ENCODE measurements at regions of chr15 and their contacts with region 1.

Region 1: DNA sequence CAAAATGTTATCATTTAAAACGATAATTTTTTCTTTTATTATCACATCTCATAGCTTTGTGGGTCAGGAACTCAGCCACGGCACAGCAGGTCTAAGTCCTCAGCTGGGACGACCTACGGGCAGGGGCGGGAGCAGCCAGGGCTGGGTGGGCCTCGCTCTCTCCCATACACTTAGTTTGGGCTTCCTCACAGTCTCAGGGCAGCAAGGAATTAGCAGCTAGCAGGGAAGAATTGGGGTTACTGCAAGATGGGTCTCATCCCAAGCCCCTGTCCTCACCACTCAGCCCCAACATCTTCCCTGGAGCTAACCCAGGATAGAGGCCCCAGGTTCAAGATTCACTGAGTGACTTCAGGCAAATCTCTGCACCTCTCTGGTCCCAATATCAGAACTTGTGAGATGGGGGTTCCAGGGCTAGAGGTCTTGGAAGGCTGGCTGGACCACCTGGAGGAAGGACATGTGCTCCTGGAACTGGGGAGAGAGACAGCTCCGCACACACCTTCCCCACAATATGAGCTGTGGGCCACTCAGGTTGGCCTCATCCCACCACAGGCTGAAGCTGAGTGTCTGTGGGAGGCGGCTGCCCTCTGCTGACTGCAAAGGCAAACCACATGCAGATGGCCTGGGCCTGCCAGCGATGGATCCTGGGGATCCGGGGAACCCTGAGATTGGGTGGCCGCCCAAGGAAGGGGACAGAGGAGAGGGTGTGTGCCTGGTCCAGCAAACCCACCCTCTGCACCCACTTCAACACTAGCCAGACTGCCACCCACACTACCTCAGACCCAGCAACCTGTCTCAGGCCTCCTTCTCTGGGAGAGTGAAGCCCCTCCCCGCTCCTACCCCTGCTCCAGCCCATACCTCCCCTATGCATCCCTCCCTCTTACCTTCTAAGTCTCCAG is 45.0 kb downstream of the CYP11A1 start:
- DNase-seq: peak; percentile 82

Region 2: DNA sequence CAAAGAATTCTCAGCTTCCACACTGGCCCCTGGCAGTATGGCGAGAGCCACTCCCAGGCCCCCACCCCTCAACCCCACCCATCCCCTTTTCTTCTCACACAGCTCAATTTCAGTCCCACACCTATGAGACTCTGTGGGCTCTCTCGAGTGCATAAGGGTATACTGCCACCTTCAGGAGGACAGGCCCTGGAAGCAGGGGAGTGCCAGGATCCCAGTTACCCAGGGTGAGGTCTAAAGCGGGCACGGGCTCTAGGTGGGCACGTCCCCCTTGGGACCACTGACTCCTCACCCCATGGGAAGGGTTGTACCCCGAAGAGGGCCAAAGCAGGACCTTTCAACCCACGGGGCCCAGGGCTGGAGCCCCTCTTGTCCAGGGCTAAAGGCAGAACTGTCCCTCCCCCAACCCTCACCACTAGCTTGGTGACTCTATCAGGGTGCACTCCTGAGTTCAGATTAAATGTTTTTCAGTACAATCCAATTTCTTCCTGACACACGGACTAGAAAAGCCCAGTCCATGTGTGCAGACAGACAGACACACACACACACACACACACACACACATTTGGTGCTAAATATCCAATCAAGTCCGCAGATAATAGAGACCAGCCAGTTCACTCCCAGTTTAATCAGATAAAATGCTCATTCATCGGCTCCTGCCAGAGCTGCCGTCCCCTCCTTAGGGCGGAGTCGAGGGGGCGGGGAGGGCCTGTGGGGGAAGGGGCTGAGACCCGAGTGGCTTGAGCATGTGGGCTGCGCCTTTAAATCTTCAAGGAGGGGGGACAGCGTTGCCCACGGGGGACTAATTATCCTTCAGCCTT is 14.4 kb before region 1 on chr15:
- CTCF ChIA-PET with region 1: interaction called, 97 read pairs
- POLR2A ChIA-PET with region 1: no interaction called
- DNase-seq: peak; percentile 61